ENCODE measurements at regions of chr9 and their contacts with region 1.

Region 1: GRCh38 chr9:31556667-31557463 is 827.6 kb upstream of the ACO1 start:
- DNase-seq: no peak
- ATAC-seq: no peak
- H3K4me3 ChIP-seq: no peak overlapping the region
- H3K4me3 Mint-ChIP-seq: no peak overlapping the region
- H3K27ac ChIP-seq: no peak overlapping the region
- H3K27ac Mint-ChIP-seq: peak overlapping the region in 1 of 9 donors; percentile 20
- H3K4me1 ChIP-seq: no peaks in the 10 kb centered on the region
- H3K4me1 Mint-ChIP-seq: peaks cover 0 to 5% (median 0%) of the 10 kb centered on the region in 7 donors
- H3K27me3 ChIP-seq: no peaks in the 10 kb centered on the region
- H3K27me3 Mint-ChIP-seq: no peaks in the 10 kb centered on the region

Region 2: DNA sequence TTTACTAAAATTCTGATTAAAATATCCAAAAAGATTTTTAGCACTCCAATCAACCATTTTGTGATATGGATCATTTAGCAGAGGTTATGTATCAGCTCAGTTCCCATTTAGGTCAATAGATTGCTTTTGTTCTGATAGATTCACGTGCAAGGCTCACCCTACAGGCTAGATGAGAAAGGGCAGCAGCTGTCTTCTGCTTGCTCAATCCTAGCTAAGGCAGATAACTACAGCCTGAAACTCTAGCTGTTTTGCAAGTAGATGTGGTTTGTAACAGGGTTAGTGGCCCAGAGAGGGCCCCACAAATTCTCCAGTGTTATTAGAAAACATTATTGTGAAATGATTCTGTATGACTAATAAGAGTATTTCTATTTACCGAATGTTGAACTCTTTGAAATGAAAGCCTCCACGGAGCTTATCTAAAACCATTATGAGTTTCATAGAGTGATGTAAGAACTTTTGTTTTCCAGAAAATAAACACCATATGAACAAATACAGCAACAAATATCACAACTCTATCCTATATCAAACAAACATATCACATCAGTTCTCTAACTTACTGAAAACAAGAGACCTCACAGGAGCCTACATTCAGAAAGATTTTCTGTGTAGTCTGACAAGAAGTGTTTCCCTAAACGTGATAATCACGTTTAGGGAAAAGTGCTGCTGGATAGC is 14.3 kb before region 1 on chr9:
- CTCF ChIA-PET with region 1: no interaction called
- POLR2A ChIA-PET with region 1: no interaction called
- intact Hi-C with region 1: loop called in 1 of 2 experiments (anchors 1 kb)
- DNase-seq: peak in 5 of 9 donors; percentile 3 to 25 (median 18)
- ATAC-seq: peak; percentile 79
- H3K4me3 ChIP-seq: no peak overlapping the region
- H3K4me3 Mint-ChIP-seq: no peak overlapping the region
- H3K27ac ChIP-seq: no peak overlapping the region
- H3K27ac Mint-ChIP-seq: peak overlapping the region in 1 of 9 donors; percentile 1
- H3K4me1 ChIP-seq: peaks cover 0 to 6% of the 10 kb centered on the region in 2 donors
- H3K4me1 Mint-ChIP-seq: peaks cover 0 to 14% (median 6%) of the 10 kb centered on the region in 7 donors
- H3K27me3 ChIP-seq: no peaks in the 10 kb centered on the region
- H3K27me3 Mint-ChIP-seq: no peaks in the 10 kb centered on the region